Activated CD4-positive, alpha-beta T cell treated with anti-CD3 and anti-CD28 coated beads for 36 hours (primary cell): ENCODE measurements at regions of chr16 and their contacts with region 1.

Region 1: GRCh38 chr16:79071424-79071823 is 529.1 kb downstream of the MAF start:
- DNase-seq: no peak
- ATAC-seq: no peak
- H3K4me3 Mint-ChIP-seq: no peak overlapping the region
- H3K27ac Mint-ChIP-seq: peak overlapping the region; percentile 34
- H3K4me1 Mint-ChIP-seq: peaks cover 64% of the 10 kb centered on the region
- H3K27me3 Mint-ChIP-seq: peaks cover 2% of the 10 kb centered on the region

Region 2: DNA sequence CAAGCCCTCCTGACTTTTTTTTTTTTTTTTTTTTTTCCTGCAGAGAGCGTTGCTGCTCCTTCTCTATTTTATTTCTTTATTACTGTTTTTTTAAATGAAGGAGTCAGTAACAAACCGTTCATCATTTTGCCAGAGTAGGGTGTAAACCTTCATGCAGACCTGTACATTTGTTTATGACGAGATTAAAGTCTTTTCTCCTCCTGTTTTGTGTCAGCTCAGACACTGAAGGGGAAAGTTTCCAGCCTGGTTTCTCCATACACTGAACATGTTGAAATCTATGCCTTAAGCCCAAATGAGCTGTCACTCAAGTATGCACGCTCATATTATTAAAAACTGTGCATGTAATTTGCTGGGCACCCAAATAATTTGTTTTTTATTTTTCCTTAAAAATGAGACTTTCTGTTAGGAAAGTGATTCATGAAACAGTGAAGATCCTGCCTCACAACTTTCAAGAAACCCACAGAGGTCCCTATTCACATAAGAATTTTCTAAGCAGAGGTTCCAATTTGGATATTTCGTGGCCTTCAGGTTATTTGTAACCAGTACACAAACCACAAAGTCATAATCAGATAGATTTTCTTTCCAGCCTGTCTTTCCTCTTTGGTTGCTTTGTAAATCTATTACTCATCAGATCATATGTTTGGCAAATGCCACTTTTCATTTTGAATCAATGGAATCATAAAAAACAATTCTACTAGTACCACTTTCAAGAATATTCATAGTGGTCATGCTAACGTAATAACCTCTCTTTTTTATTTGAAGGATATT is 171.2 kb before region 1 on chr16:
- CTCF ChIA-PET with region 1: interaction called, 4 read pairs
- POLR2A ChIA-PET with region 1: interaction called, 3 read pairs
- intact Hi-C with region 1: loop called (anchors 1 to 2 kb)
- DNase-seq: no peak
- ATAC-seq: peak; percentile 55
- H3K4me3 Mint-ChIP-seq: no peak overlapping the region
- H3K27ac Mint-ChIP-seq: peak overlapping the region; percentile 80
- H3K4me1 Mint-ChIP-seq: peaks cover 52% of the 10 kb centered on the region
- H3K27me3 Mint-ChIP-seq: no peaks in the 10 kb centered on the region

Region 3: GRCh38 chr16:79089735-79090284 is 18.4 kb after region 1 on chr16:
- CTCF ChIA-PET with region 1: interaction called, 6 read pairs
- POLR2A ChIA-PET with region 1: interaction called, 8 read pairs
- intact Hi-C with region 1: loop called (anchors 1 kb)
- DNase-seq: peak; percentile 82
- ATAC-seq: peak; percentile 70
- H3K4me3 Mint-ChIP-seq: peak overlapping the region; percentile 66
- H3K27ac Mint-ChIP-seq: peak overlapping the region; percentile 95
- H3K4me1 Mint-ChIP-seq: peaks cover 57% of the 10 kb centered on the region
- H3K27me3 Mint-ChIP-seq: no peaks in the 10 kb centered on the region

Region 4: DNA sequence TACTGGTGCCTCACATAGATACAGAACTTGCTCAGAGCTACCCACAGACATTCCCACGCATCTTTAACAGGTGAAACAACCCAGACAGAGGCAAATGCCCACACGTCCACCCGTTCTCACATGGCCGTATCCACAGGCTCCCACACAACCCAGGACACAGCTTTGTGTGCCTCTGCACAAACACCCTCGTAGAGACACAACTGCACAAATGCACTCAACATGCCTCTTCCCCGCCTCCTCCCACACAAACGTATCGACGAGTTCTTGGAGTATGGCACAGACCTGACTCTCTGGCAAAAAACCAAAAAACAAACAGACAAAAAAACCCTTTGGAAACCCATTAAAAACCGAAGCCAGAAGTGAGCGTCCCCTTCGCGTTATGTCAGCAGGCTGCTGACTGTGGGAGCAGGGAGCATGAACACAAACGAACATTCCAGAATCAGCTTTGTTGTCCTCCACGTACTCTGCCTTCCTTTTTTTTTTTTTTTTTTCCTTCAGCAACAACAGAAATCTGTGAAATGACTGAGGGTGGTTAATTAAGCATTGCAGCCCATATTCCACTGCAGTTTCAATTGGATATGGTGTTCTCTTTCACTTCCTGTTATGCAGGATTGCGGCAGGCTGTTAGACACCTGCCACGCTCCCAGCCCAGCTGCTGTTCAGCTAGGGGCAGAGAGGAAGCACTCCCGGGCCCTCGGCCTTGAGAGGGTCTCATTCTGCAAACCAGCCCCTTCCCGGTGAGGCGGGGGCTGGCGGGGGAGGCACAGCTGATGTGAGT is 215.4 kb after region 1 on chr16:
- CTCF ChIA-PET with region 1: interaction called, 3 read pairs
- POLR2A ChIA-PET with region 1: interaction called, 4 read pairs
- intact Hi-C with region 1: loop called in 1 of 2 experiments (anchors 5 kb)
- DNase-seq: peak; percentile 63
- ATAC-seq: peak; percentile 70
- H3K4me3 Mint-ChIP-seq: peak overlapping the region; percentile 34
- H3K27ac Mint-ChIP-seq: peak overlapping the region; percentile 86
- H3K4me1 Mint-ChIP-seq: peaks cover 52% of the 10 kb centered on the region
- H3K27me3 Mint-ChIP-seq: peaks cover 12% of the 10 kb centered on the region